Panc1 (cell line): ENCODE measurements at regions of chr21 and their contacts with region 1.

Region 1: DNA sequence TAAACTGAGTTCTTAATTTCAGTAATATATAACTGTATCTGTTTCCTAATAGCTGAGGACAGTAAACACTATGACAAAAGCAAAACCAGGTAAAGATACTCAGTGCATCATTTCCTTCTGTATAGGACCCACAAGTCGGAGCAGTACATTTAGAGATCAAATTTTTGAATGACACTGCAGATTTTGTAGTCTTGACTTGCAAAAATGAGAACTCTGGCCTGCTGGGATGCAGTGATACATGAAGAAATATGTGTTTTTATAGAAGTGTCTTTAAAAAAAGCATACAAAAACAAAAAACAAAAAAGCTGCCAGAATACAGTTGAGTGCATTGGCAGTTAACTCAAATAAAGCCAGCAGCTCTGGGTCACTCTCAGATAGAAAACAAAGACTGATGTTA is 19.0 kb downstream of the GART start:
- DNase-seq: no peak
- ATAC-seq: no peak
- H3K4me3 ChIP-seq: no peak overlapping the region
- H3K27ac ChIP-seq: no peak overlapping the region
- H3K4me1 ChIP-seq: no peaks in the 10 kb centered on the region
- H3K27me3 ChIP-seq: no peaks in the 10 kb centered on the region
- CTCF ChIP-seq: no peak

Region 2: DNA sequence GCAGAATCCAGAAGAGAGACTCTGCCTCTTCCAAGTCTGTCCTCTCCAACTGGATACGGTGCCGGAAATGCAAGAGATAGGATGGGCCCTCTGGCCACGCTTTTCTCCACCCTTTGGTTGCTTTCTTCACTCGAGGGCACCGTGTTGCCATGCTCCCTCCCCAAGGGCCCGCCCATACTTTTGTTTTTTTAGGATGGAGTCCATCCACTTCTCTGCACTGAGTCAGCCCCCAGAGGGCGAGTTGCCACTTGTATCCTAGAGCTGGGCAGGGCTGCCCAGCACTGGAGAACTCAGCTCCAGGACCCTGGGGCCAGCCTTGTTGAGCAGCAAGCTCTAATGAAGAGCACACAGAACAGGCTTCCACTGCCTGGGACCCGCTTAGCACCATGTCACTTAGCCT is 94.3 kb before region 1 on chr21:
- CTCF ChIA-PET with region 1: no interaction called
- POLR2A ChIA-PET with region 1: no interaction called
- in situ Hi-C with region 1: no loop called
- intact Hi-C with region 1: no loop called
- DNase-seq: no peak
- ATAC-seq: peak; percentile 88
- H3K4me3 ChIP-seq: no peak overlapping the region
- H3K27ac ChIP-seq: no peak overlapping the region
- H3K4me1 ChIP-seq: no peaks in the 10 kb centered on the region
- H3K27me3 ChIP-seq: no peaks in the 10 kb centered on the region
- CTCF ChIP-seq: no peak

Region 3: GRCh38 chr21:33451634-33452071 is 71.3 kb before region 1 on chr21:
- CTCF ChIA-PET with region 1: no interaction called
- POLR2A ChIA-PET with region 1: no interaction called
- in situ Hi-C with region 1: no loop called
- intact Hi-C with region 1: no loop called
- DNase-seq: no peak
- ATAC-seq: no peak; the same call in 1 of the 2 replicates
- H3K4me3 ChIP-seq: no peak overlapping the region
- H3K27ac ChIP-seq: no peak overlapping the region
- H3K4me1 ChIP-seq: no peaks in the 10 kb centered on the region
- H3K27me3 ChIP-seq: no peaks in the 10 kb centered on the region
- CTCF ChIP-seq: no peak

Region 4: GRCh38 chr21:33479679-33480480 is 43.1 kb before region 1 on chr21 and contains the start of gene TMEM50B:
- CTCF ChIA-PET with region 1: interaction called, 11 read pairs
- POLR2A ChIA-PET with region 1: no interaction called
- in situ Hi-C with region 1: no loop called
- intact Hi-C with region 1: no loop called
- DNase-seq: peak; percentile 38
- ATAC-seq: peak; percentile 97
- H3K4me3 ChIP-seq: peak within 1 kb of the TSS; percentile 80
- H3K27ac ChIP-seq: peak within 1 kb of the TSS; percentile 84
- H3K4me1 ChIP-seq: no peaks in the 10 kb centered on the region; the same call in 1 of the 2 replicates
- H3K27me3 ChIP-seq: no peaks in the 10 kb centered on the region
- CTCF ChIP-seq: no peak; the same call in 1 of the 2 replicates
- total RNA-seq, gene TMEM50B: 18.5 TPM

Region 5: GRCh38 chr21:33751120-33751519 is 228.2 kb after region 1 on chr21:
- CTCF ChIA-PET with region 1: no interaction called
- POLR2A ChIA-PET with region 1: no interaction called
- in situ Hi-C with region 1: no loop called
- intact Hi-C with region 1: no loop called
- DNase-seq: no peak
- ATAC-seq: no peak
- H3K4me3 ChIP-seq: no peak overlapping the region
- H3K27ac ChIP-seq: no peak overlapping the region
- H3K4me1 ChIP-seq: no peaks in the 10 kb centered on the region
- H3K27me3 ChIP-seq: no peaks in the 10 kb centered on the region
- CTCF ChIP-seq: no peak

Region 6: GRCh38 chr21:35491920-35492678 is 1969.1 kb after region 1 on chr21:
- CTCF ChIA-PET with region 1: no interaction called
- POLR2A ChIA-PET with region 1: no interaction called
- in situ Hi-C with region 1: no loop called
- intact Hi-C with region 1: no loop called
- DNase-seq: no peak
- ATAC-seq: no peak
- H3K4me3 ChIP-seq: no peak overlapping the region
- H3K27ac ChIP-seq: no peak overlapping the region
- H3K4me1 ChIP-seq: no peaks in the 10 kb centered on the region
- H3K27me3 ChIP-seq: no peaks in the 10 kb centered on the region
- CTCF ChIP-seq: no peak